CD4-positive, alpha-beta memory T cell (primary cell): ENCODE measurements at regions of chr2 and their contacts with region 1.

Region 1: GRCh38 chr2:68709421-68709911 is 25.1 kb upstream of the ARHGAP25 start:
- DNase-seq: peak in 3 of 5 donors; percentile 29 to 47 (median 40)
- H3K4me3 ChIP-seq: no peak overlapping the region
- H3K4me3 Mint-ChIP-seq: peak overlapping the region in 3 of 8 donors; percentile 27 to 67 (median 30)
- H3K27ac ChIP-seq: peak overlapping the region; percentile 24
- H3K27ac Mint-ChIP-seq: peak overlapping the region; percentile 60 to 82 (median 68)
- H3K4me1 ChIP-seq: peaks cover 10% of the 10 kb centered on the region
- H3K4me1 Mint-ChIP-seq: peaks cover 13 to 37% (median 20%) of the 10 kb centered on the region in 4 donors
- H3K27me3 ChIP-seq: no peaks in the 10 kb centered on the region
- H3K27me3 Mint-ChIP-seq: no peaks in the 10 kb centered on the region

Region 2: DNA sequence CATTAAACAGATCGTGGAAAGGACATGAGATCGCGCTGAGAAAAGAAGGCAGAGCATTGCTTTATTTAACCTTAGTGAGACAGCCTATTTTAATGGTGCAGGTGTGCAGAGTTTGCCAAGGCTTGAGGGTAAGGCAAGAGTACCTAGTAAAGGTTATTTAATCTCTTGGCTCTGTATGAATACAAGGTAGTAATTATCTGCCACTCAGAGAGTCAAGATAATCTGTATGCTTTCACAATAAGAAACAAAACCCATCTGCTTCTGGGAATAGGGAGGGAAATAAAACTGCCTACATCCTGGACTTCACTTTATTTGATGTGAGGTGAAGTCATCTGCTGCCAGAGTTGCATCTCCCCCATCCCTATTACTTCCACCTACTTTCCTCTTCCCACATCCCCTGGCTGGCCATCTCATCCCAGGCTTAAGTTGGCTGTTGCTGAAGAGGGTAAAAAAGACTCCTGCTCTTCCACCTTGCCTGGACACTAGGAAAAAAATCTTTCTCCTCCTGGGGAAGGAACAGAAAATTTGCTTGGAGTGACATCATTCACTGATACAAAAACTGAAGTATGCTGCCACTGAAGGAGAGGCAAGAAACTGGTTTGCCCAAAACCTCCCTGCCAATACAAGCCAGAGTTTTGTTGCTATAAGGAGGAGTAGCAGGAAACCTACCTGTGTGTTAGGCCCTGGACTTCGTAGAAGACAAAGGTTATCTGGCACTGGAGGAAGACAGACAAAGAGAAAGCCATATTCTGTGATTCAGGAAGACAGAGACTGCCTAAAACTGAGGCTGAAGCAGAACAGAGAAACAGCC is 10.7 kb before region 1 on chr2:
- CTCF ChIA-PET with region 1: interaction called, 15 read pairs
- POLR2A ChIA-PET with region 1: no interaction called
- intact Hi-C with region 1: no loop called
- DNase-seq: no peak
- H3K4me3 ChIP-seq: no peak overlapping the region
- H3K4me3 Mint-ChIP-seq: no peak overlapping the region
- H3K27ac ChIP-seq: no peak overlapping the region
- H3K27ac Mint-ChIP-seq: peak overlapping the region in 1 of 7 donors; percentile 22
- H3K4me1 ChIP-seq: peaks cover 15% of the 10 kb centered on the region
- H3K4me1 Mint-ChIP-seq: peaks cover 5 to 9% (median 8%) of the 10 kb centered on the region in 4 donors
- H3K27me3 ChIP-seq: no peaks in the 10 kb centered on the region
- H3K27me3 Mint-ChIP-seq: peaks cover 0 to 4% of the 10 kb centered on the region in 2 donors

Region 3: DNA sequence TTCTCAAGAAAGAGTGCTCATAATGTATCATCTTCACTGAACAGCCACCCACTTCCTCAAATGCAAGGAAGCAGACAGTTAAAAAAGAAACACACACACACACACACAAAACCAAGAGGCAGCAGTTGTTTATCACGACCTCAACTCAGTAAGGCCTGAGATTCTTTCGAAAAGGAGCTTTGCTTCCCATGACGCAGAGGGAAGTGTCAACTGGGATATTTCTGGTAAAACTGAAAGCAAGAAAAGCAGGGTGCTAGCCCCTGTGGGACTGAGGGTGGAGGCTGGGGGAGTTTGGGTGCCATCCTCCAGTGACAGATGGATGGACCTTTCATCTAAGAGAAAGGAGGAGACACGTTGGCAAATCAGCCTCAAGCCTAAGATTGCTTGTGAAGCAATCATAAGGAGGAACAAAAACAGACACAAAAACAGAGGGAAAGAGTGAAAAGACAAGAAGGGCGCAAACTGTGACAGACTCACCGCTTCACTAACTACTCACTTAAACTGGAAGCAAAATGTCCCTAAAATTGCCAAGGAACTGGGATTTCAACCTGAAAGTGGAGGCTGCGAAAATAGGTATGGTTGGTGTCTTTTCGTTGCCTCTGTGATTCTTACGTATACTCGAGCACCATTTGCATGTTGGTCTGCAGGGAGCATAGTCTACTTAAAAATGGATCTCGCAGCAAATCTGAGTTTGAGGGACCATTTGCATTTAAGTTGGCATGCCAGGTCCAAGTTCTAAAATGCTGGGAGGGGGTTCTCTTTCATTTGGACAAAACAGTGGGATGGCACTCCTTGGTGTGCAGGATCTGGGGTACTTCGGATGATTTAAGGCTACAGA is 25.4 kb after region 1 on chr2 and contains the start of gene ARHGAP25:
- CTCF ChIA-PET with region 1: interaction called, 745 read pairs
- POLR2A ChIA-PET with region 1: interaction called, 659 read pairs
- intact Hi-C with region 1: no loop called
- DNase-seq: peak; percentile 58 to 79 (median 61)
- H3K4me3 ChIP-seq: peak within 1 kb of the TSS; percentile 83 to 99
- H3K4me3 Mint-ChIP-seq: no peak within 1 kb of the TSS
- H3K27ac ChIP-seq: peak within 1 kb of the TSS; percentile 81
- H3K27ac Mint-ChIP-seq: no peak within 1 kb of the TSS
- H3K4me1 ChIP-seq: peaks cover 54% of the 10 kb centered on the region
- H3K4me1 Mint-ChIP-seq: peaks cover 23 to 44% (median 34%) of the 10 kb centered on the region in 4 donors
- H3K27me3 ChIP-seq: no peaks in the 10 kb centered on the region
- H3K27me3 Mint-ChIP-seq: no peaks in the 10 kb centered on the region
- total RNA-seq, gene ARHGAP25: 162 to 163 TPM

Region 4: DNA sequence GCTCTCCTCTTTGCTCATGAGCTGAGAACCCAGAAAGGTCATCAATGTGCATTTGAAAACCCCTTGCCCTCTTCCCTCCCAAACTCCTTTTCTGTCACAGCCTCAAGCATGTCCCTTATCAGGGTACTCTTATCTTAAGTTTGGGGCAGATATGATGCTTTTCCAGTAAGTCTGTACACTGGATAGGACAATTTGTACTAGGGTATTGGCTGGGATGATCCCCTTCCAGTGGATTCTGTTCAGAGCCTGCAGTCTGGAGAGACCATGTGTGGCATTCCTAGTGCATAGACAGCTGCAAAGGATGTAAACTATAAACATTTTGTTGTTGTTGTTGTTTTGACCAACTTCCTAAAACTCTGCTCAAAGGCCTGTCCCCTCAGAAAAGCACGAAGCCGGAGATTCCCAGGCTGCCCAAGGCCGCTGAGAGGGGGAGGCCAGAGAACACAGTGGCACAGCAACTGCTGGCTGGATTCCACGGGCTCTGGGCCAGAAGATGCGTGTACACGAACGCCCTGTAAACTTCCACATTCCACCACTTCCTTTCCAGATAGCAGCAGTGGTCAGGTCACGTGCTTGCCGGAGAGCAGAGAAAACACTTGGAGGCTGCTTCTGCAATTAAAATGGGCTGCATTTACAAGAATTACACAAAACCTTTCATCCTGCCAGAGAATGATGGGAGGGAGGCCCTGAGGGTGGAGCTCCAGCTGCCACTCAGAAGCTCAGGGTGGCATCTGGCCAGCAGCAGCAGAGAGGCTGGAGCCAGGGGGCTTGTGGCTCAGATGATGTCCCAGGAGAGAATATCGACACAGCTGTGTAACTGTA is 119.6 kb after region 1 on chr2:
- CTCF ChIA-PET with region 1: interaction called, 106 read pairs
- POLR2A ChIA-PET with region 1: no interaction called
- intact Hi-C with region 1: no loop called
- DNase-seq: peak; percentile 80 to 90 (median 83)
- H3K4me3 ChIP-seq: peak overlapping the region in 1 of 2 donors; percentile 32
- H3K4me3 Mint-ChIP-seq: peak overlapping the region; percentile 17 to 91 (median 80)
- H3K27ac ChIP-seq: peak overlapping the region; percentile 65
- H3K27ac Mint-ChIP-seq: peak overlapping the region; percentile 90 to 94 (median 92)
- H3K4me1 ChIP-seq: peaks cover 59% of the 10 kb centered on the region
- H3K4me1 Mint-ChIP-seq: peaks cover 50 to 73% (median 62%) of the 10 kb centered on the region in 4 donors
- H3K27me3 ChIP-seq: no peaks in the 10 kb centered on the region
- H3K27me3 Mint-ChIP-seq: no peaks in the 10 kb centered on the region

Region 5: DNA sequence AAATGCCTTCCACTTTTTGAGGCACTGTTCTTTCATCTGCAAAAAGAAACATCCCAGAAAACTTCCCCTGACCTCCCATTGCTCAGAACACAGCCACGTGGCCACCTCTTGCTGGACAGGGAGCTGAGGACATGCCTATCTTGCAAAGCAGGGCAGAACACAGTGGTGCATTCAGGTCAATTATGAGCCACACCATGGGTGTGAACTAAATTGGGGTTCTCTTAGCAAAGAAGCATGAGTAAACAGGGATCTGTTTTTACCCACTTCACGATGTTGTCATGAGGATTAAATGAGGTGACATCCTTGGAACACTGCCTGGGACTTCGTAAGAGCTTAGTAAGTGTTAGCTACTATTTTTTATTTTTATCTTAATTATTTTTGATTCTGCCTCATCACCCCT is 136.6 kb after region 1 on chr2:
- CTCF ChIA-PET with region 1: interaction called, 19 read pairs
- POLR2A ChIA-PET with region 1: no interaction called
- intact Hi-C with region 1: no loop called
- DNase-seq: no peak
- H3K4me3 ChIP-seq: no peak overlapping the region
- H3K4me3 Mint-ChIP-seq: no peak overlapping the region
- H3K27ac ChIP-seq: no peak overlapping the region
- H3K27ac Mint-ChIP-seq: no peak overlapping the region
- H3K4me1 ChIP-seq: no peaks in the 10 kb centered on the region
- H3K4me1 Mint-ChIP-seq: peaks cover 0 to 2% (median 0%) of the 10 kb centered on the region in 4 donors
- H3K27me3 ChIP-seq: no peaks in the 10 kb centered on the region
- H3K27me3 Mint-ChIP-seq: peaks cover 8 to 11% of the 10 kb centered on the region in 2 donors

Region 6: DNA sequence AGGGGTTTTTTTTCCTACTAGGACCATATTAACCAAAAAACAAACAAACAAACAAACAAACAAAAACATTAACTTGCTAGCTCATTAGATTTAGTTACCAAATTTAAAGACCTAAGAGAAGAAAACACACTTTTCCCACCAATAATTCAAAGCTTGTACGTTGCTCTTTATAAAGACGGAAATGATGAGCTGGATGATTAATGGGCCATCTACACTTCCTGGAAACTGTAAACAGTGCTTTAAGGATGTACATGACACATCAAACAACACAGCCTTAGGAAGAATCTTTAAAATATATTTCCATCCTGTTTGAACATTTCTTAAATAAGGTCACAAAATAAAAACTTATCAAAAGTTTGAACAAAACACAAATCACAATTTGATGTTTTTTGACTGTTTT is 160.7 kb after region 1 on chr2:
- CTCF ChIA-PET with region 1: no interaction called
- POLR2A ChIA-PET with region 1: no interaction called
- intact Hi-C with region 1: no loop called
- DNase-seq: no peak
- H3K4me3 ChIP-seq: no peak overlapping the region
- H3K4me3 Mint-ChIP-seq: no peak overlapping the region
- H3K27ac ChIP-seq: no peak overlapping the region
- H3K27ac Mint-ChIP-seq: peak overlapping the region in 1 of 7 donors; percentile 47
- H3K4me1 ChIP-seq: no peaks in the 10 kb centered on the region
- H3K4me1 Mint-ChIP-seq: peaks cover 0 to 6% (median under 1%) of the 10 kb centered on the region in 4 donors
- H3K27me3 ChIP-seq: no peaks in the 10 kb centered on the region
- H3K27me3 Mint-ChIP-seq: no peaks in the 10 kb centered on the region

Region 7: GRCh38 chr2:68943581-68944568 is 234.4 kb after region 1 on chr2:
- CTCF ChIA-PET with region 1: interaction called, 12 read pairs
- POLR2A ChIA-PET with region 1: no interaction called
- intact Hi-C with region 1: no loop called
- DNase-seq: peak; percentile 43 to 67 (median 58)
- H3K4me3 ChIP-seq: no peak overlapping the region
- H3K4me3 Mint-ChIP-seq: peak overlapping the region in 1 of 8 donors; percentile 12
- H3K27ac ChIP-seq: no peak overlapping the region
- H3K27ac Mint-ChIP-seq: no peak overlapping the region
- H3K4me1 ChIP-seq: no peaks in the 10 kb centered on the region
- H3K4me1 Mint-ChIP-seq: peaks cover 2 to 5% (median 5%) of the 10 kb centered on the region in 4 donors
- H3K27me3 ChIP-seq: peaks cover 15% of the 10 kb centered on the region
- H3K27me3 Mint-ChIP-seq: peaks cover 27 to 28% of the 10 kb centered on the region in 2 donors